Brain microvascular endothelial cell (primary cell): ENCODE measurements at regions of chr10 and their contacts with region 1.

Region 1: GRCh38 chr10:122298598-122299301 is 27.7 kb downstream of the BTBD16 start:
- DNase-seq: peak; percentile 67
- H3K4me3 ChIP-seq: peak overlapping the region; percentile 23
- H3K27ac ChIP-seq: no peak overlapping the region
- H3K27me3 ChIP-seq: no peaks in the 10 kb centered on the region
- CTCF ChIP-seq: peak; percentile 93

Region 2: DNA sequence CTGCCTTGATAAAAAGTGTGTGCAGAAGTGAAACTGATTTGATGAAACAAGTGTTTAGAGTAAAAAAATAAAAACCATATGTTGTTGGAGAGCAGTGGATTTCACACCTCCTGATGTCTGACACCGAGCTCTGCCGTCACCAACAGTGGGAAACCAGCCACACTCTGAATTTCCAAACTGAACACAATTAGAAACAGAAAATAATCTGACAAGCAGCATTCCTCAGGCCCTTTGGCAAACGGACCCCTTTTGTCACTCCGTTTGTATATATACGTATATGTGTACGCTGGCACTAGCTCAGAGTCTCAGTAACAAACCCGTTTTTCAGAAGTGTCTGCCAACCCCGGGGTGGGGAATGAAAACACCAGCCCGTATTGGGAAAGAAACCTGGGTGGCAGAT is 277.4 kb before region 1 on chr10:
- in situ Hi-C with region 1: no loop called
- DNase-seq: no peak
- H3K4me3 ChIP-seq: no peak overlapping the region
- H3K27ac ChIP-seq: no peak overlapping the region
- H3K27me3 ChIP-seq: peaks cover 3% of the 10 kb centered on the region
- CTCF ChIP-seq: no peak

Region 3: DNA sequence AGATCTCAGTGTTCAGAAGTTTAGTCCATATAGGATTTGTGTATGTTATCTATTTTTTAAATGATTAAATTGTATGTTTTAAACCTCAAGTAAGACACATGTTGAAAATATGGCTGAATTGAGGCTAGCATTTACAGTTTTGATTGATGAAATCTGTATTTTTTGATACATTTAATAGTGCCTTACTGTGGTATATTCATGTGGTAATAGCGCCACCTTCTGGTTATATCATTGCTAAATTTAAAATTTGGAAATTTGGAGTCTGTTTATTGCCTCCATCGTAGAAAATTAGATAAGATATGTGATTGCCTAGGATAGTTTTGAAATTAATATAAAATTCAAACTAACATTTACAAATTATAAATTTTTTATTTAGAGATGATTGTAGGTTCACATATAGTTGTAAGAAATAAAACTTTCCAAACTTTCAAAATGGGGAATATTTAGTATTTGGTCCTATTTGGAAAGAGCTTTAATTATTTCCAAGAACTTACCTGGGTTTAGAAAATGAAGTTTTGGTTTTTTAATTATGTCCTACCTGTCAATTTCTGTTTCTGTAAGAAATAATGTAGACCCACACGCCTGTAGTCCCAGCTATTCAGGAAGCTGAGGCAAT is 136.6 kb after region 1 on chr10:
- in situ Hi-C with region 1: loop called (anchors 25 kb)
- DNase-seq: no peak
- H3K4me3 ChIP-seq: no peak overlapping the region
- H3K27ac ChIP-seq: no peak overlapping the region
- H3K27me3 ChIP-seq: no peaks in the 10 kb centered on the region
- CTCF ChIP-seq: peak; percentile 5

Region 4: GRCh38 chr10:122494833-122495232 is 196.1 kb after region 1 on chr10:
- in situ Hi-C with region 1: no loop called
- DNase-seq: peak; percentile 95
- H3K4me3 ChIP-seq: peak overlapping the region; percentile 39
- H3K27ac ChIP-seq: peak overlapping the region; percentile 86
- H3K27me3 ChIP-seq: no peaks in the 10 kb centered on the region
- CTCF ChIP-seq: no peak